Activated T-helper 2 cell treated with anti-CD3 and anti-CD28 coated beads, Interferon-gamma antibody, Interleukin-2, Interleukin-4, amounts not matched to agents 10 μg/mL and 5 μg/mL and 100 μg/mL, durations not matched to agents 14 hours and 24 hours and 36 hours (primary cell): ENCODE measurements at regions of chr10 and their contacts with region 1.

Region 1: DNA sequence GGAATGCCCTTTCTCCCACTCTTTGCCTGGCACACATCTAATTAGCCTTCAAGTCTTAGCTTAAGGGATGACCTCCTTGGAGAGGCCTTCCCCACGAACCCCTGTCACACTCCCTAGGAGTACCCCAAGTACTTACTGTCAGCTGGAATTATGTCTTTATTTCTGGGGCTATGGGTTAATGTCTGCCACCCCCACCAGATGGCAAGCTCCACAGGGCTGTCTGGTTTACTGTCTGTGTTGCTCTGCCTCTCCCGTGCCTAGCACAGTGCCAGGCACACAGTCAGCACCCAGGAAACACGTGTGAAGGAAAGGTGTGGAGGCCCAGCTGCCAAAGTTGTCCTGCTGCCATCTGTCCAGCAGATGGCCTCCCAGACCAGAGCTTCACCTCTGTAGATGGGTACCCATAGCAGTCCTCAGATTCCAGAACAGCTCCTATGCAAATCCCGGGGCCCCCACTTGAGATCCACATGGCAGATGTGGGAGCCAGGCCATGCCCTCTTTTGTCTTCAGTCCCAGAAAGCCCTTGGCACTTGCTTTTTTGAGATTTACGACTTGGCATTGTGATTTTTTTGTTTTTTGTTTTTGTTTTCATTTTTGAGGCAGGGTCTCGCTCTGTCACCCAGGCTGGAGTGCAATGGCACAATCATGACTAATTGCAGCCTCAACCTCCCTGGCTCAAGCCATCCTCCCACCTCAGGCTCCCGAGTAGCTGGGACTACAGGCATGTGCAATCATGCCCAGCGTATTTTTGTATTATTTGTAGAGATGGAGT is 17.2 kb upstream of the PALD1 start:
- DNase-seq: no peak
- H3K4me3 Mint-ChIP-seq: no peak overlapping the region
- H3K27ac Mint-ChIP-seq: no peak overlapping the region
- H3K4me1 Mint-ChIP-seq: no peaks in the 10 kb centered on the region
- H3K27me3 Mint-ChIP-seq: peaks cover 38% of the 10 kb centered on the region

Region 2: DNA sequence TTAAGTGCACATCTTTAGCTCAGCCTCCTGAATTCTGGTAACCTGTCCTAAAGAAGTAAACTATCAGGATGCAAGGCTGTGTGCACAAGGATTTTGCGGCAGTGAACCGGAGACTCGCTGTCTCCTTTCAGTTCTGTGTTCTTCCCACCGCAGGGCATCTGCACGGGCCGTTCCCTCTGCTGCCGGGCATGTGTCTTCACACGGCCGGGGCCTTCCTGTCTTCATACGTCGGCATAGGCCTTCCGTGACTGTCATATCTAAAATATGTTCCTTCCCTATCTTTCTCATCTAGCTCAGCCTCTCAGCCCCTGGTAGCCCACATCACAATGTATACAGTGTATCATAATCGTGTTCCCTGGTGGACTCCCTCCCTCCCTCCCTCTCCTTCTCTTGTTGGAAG is 33.6 kb after region 1 on chr10:
- intact Hi-C with region 1: no loop called
- DNase-seq: no peak
- H3K4me3 Mint-ChIP-seq: no peak overlapping the region
- H3K27ac Mint-ChIP-seq: peak overlapping the region; percentile 73
- H3K4me1 Mint-ChIP-seq: peaks cover 32% of the 10 kb centered on the region
- H3K27me3 Mint-ChIP-seq: peaks cover 6% of the 10 kb centered on the region

Region 3: DNA sequence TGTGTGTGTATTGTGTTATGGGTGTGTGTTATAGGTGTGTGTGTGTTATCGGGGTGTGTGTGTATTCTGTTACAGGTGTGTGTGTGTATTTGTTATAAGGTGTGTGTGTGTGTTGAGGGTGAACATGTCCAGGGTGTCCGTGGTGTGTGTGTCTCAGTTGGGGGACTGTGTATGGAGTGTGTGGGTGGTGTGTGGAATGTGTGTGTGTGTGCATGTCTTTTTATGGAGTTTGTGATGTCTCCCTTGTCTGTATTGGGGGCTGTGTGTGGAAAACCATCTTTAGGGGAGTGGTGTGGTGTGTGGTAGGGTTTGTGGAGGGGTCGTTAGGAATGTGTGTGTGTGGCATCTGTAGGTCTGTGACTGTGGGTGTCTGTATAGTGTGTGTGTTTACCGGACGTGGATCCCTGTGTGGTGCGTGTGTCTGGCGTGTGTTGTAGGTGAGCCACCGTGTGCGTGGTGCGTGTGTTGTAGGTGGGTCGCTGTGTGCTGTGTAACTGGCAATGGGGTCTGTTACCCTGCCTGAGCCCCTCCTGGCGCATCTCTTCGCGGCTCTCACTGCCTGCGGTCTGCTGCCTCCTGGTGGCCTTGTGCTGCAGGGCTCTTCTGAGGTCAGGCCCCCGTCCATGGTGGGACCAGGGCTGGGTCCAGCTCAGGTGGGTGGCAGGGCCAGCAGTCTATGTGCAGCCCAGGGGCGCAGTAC is 78.8 kb after region 1 on chr10:
- intact Hi-C with region 1: loop called (anchors 1 kb)
- DNase-seq: no peak
- H3K4me3 Mint-ChIP-seq: no peak overlapping the region
- H3K27ac Mint-ChIP-seq: no peak overlapping the region
- H3K4me1 Mint-ChIP-seq: no peaks in the 10 kb centered on the region
- H3K27me3 Mint-ChIP-seq: no peaks in the 10 kb centered on the region

Region 4: DNA sequence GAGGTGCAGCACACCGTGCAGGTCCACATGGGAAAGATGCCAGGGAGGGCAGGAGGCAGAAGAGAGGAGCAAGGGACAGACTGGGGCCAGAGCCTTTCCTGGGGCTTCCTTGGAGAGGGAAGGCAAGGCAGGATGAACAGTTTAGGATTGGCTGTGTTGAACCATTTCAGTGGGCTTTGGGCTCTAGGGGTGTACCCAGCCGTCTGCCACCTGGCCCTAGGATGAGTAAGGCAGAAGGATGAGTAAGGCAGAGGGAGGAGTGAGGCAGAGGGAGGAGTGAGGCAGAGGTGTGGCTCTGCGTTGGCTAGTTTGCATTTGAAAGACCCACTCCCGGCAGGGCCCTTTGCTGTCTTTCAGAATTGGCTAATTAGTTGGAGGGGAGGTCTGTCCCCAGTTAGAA is 172.6 kb after region 1 on chr10:
- intact Hi-C with region 1: no loop called
- DNase-seq: no peak
- H3K4me3 Mint-ChIP-seq: no peak overlapping the region
- H3K27ac Mint-ChIP-seq: no peak overlapping the region
- H3K4me1 Mint-ChIP-seq: no peaks in the 10 kb centered on the region
- H3K27me3 Mint-ChIP-seq: peaks cover 14% of the 10 kb centered on the region

Region 5: GRCh38 chr10:71805776-71806703 is 1344.6 kb after region 1 on chr10:
- intact Hi-C with region 1: no loop called
- DNase-seq: no peak
- H3K4me3 Mint-ChIP-seq: no peak overlapping the region
- H3K27ac Mint-ChIP-seq: no peak overlapping the region
- H3K4me1 Mint-ChIP-seq: no peaks in the 10 kb centered on the region
- H3K27me3 Mint-ChIP-seq: peaks cover 6% of the 10 kb centered on the region